BJ (cell line): ENCODE measurements at regions of chr11 and their contacts with region 1.

Region 1: GRCh38 chr11:78189174-78189724 is 530 bp downstream of the USP35 start:
- DNase-seq: no peak
- H3K4me3 ChIP-seq: peak overlapping the region; percentile 62
- H3K27me3 ChIP-seq: no peaks in the 10 kb centered on the region
- CTCF ChIP-seq: no peak

Region 2: GRCh38 chr11:78030429-78031325 is 158.6 kb before region 1 on chr11:
- CTCF ChIA-PET with region 1: no interaction called
- POLR2A ChIA-PET with region 1: interaction called, 22 read pairs
- DNase-seq: no peak
- H3K4me3 ChIP-seq: no peak overlapping the region
- H3K27me3 ChIP-seq: no peaks in the 10 kb centered on the region
- CTCF ChIP-seq: no peak